Gastrocnemius medialis (tissue), 4 donors: ENCODE measurements at regions of chr13 and their contacts with region 1.

Region 1: GRCh38 chr13:78273116-78273515 is 330.2 kb downstream of the POU4F1 start:
- DNase-seq: no peak
- ATAC-seq: no peak
- H3K4me3 ChIP-seq: no peak overlapping the region
- H3K27ac ChIP-seq: no peak overlapping the region
- H3K4me1 ChIP-seq: no peaks in the 10 kb centered on the region
- H3K27me3 ChIP-seq: no peaks in the 10 kb centered on the region
- CTCF ChIP-seq: no peak
- POLR2A ChIP-seq: no peak

Region 2: GRCh38 chr13:77999746-78000145 is 273.4 kb before region 1 on chr13:
- in situ Hi-C with region 1: no loop called
- intact Hi-C with region 1: loop called (anchors 5 kb)
- DNase-seq: no peak
- ATAC-seq: no peak
- H3K4me3 ChIP-seq: no peak overlapping the region
- H3K27ac ChIP-seq: no peak overlapping the region
- H3K4me1 ChIP-seq: no peaks in the 10 kb centered on the region
- H3K27me3 ChIP-seq: no peaks in the 10 kb centered on the region
- CTCF ChIP-seq: no peak
- POLR2A ChIP-seq: no peak

Region 3: DNA sequence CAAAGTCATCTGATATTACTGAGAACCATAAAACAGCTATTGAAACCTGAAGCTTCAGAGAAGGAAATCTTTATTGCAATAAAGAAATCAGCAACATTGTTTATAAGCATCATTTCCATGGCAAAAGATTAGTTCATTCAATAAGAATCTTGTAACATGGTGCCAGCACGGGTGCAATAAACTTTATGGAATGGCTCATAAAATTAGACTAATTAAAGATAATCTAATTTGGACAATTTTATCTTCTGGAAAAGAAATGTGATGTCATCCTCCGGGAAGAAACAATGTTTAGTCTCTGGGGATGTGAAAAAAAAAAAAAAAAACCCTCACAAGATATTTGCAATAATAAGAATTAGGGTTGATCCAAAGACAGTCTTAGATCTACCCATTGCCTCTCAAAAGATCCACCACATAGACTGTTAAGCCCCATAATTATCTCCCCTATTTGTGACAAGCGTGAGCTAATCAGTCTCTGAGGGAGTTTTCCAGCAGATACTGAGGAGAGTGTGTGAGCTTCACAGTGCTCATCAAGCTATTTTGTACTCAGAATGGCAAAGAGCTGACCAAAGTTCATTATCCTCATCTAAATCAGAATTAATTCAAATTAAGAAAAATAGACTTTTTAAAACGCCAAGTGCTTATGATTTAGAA is 57.5 kb before region 1 on chr13:
- in situ Hi-C with region 1: no loop called
- intact Hi-C with region 1: no loop called
- DNase-seq: no peak
- ATAC-seq: no peak
- H3K4me3 ChIP-seq: no peak overlapping the region
- H3K27ac ChIP-seq: no peak overlapping the region
- H3K4me1 ChIP-seq: no peaks in the 10 kb centered on the region
- H3K27me3 ChIP-seq: no peaks in the 10 kb centered on the region
- CTCF ChIP-seq: no peak
- POLR2A ChIP-seq: no peak